ENCODE measurements at regions of chr5 and their contacts with region 1.

Region 1: GRCh38 chr5:148383564-148384379 is at the start of gene FBXO38:
- DNase-seq: peak; percentile 99
- H3K4me3 Mint-ChIP-seq: peak within 1 kb of the TSS; percentile 89
- H3K27ac Mint-ChIP-seq: peak within 1 kb of the TSS; percentile 94
- H3K4me1 Mint-ChIP-seq: peaks cover 63% of the 10 kb centered on the region
- H3K27me3 Mint-ChIP-seq: no peaks in the 10 kb centered on the region
- total RNA-seq, gene FBXO38: 31.7 to 34.2 TPM

Region 2: DNA sequence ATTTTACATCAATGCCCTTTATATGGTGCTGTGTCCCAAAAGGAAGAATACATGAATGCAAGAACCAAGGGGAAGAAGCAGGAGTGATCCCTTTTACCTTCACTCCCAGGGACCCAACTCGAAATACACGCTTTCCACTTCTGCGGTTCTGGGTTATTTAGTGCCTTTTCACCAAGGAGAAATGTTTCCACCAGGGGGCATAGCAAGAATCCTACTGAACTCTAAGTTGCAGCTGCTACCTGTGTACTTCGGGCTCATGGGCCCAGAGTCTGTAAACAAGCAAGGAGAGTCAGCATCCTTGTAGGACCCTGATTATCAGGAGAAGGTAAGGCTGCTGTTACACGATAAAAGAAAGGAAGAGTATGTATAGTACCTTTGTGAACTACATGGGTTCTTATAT is 919.6 kb before region 1 on chr5:
- CTCF ChIA-PET with region 1: no interaction called
- intact Hi-C with region 1: no loop called
- DNase-seq: no peak
- H3K4me3 Mint-ChIP-seq: no peak overlapping the region
- H3K27ac Mint-ChIP-seq: no peak overlapping the region
- H3K4me1 Mint-ChIP-seq: no peaks in the 10 kb centered on the region
- H3K27me3 Mint-ChIP-seq: peaks cover 8% of the 10 kb centered on the region

Region 3: DNA sequence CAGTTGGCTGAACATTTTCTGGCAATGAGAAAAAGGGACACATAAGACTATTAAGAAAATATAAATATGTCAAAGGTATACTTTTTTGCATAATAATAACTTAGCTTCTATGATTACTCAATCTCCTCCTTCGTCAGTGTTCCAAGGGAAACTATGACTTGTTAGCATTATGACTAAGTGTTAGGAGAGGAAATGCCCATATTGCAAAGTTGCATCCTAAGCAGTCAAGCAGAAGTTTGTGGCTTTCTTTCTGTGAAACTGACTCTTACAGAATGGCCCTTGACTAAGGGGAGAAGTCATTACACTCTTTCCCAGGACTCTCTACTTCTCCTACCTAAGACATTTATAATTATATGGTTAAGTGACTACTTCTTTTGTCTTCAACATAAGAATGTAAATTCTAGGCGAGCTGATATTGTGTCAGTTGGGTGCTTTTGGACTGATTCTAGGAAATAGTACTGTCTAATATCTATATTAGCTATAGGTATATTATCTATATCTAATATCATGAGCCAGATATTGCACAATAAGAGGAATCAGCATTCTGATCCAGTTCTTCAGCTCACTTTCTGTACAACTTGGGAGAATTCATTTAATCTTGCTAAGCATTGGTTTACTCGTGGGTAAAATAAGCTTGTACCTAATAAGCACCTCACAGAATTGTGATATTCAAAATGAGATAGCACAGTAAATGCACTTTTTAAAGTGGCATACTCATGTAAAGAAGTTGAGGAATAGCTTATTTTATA is 197.3 kb before region 1 on chr5:
- CTCF ChIA-PET with region 1: no interaction called
- intact Hi-C with region 1: loop called (anchors 1 kb)
- DNase-seq: peak; percentile 9
- H3K4me3 Mint-ChIP-seq: no peak overlapping the region
- H3K27ac Mint-ChIP-seq: no peak overlapping the region
- H3K4me1 Mint-ChIP-seq: peaks cover 2% of the 10 kb centered on the region
- H3K27me3 Mint-ChIP-seq: peaks cover 10% of the 10 kb centered on the region

Region 4: GRCh38 chr5:148482691-148483462 is 99.1 kb after region 1 on chr5:
- CTCF ChIA-PET with region 1: no interaction called
- intact Hi-C with region 1: loop called (anchors 1 kb)
- DNase-seq: peak; percentile 82
- H3K4me3 Mint-ChIP-seq: no peak overlapping the region
- H3K27ac Mint-ChIP-seq: no peak overlapping the region
- H3K4me1 Mint-ChIP-seq: peaks cover 3% of the 10 kb centered on the region
- H3K27me3 Mint-ChIP-seq: peaks cover 26% of the 10 kb centered on the region

Region 5: GRCh38 chr5:148606296-148606695 is 222.5 kb after region 1 on chr5:
- CTCF ChIA-PET with region 1: no interaction called
- intact Hi-C with region 1: no loop called
- DNase-seq: no peak
- H3K4me3 Mint-ChIP-seq: no peak overlapping the region
- H3K27ac Mint-ChIP-seq: no peak overlapping the region
- H3K4me1 Mint-ChIP-seq: no peaks in the 10 kb centered on the region
- H3K27me3 Mint-ChIP-seq: peaks cover 2% of the 10 kb centered on the region

Region 6: DNA sequence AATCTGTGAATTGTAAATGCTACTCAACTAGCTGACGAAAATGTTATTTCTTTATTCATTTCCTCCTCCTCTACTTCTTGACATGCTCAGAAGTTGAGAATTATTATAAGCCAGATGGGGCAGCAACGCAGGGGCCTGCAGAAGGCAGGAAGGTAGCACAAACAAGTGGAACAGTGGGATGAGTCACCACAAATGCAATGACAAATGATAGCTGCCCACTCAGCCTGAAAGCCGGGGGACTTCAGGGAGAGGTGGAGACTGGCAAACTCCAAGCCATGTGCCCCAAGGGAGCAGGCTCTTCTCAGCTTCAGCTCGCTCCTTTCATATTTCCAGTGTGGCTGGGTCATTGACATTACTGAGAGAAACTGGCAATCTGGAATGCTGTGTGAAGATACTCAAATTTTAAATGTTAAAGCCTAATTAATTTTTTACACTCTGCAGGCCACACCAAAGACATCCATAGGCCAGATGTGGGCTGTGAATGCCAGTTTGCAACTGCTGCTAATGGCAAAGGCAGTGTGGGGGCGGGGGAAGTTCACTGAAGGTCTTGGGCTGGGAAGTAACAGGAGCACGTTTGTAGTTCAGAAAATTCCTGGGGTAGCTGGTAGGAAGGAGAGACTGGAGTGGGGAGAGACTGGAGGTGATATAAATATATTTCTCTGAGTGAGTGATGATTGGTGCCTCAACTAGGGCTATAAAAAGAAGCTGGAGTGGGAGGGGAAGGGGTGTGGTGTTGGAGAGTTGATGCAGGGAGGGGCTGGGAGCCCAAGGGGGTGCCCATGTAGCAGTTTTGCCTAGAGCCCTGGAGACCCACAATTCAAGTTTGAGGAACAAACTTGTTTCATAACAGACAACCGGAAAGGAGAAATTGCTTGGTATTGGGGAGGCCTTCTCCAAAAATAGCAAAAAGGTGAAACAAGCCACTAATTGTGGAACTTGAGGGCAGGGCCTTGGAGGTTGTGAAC is 421.8 kb after region 1 on chr5:
- CTCF ChIA-PET with region 1: no interaction called
- intact Hi-C with region 1: loop called (anchors 5 kb)
- DNase-seq: peak; percentile 61
- H3K4me3 Mint-ChIP-seq: no peak overlapping the region
- H3K27ac Mint-ChIP-seq: no peak overlapping the region
- H3K4me1 Mint-ChIP-seq: peaks cover 58% of the 10 kb centered on the region
- H3K27me3 Mint-ChIP-seq: peaks cover 15% of the 10 kb centered on the region

Region 7: GRCh38 chr5:149357370-149358293 is 973.9 kb after region 1 on chr5 and contains the start of gene PCYOX1L:
- CTCF ChIA-PET with region 1: no interaction called
- intact Hi-C with region 1: loop called (anchors 1 kb)
- DNase-seq: peak; percentile 95
- H3K4me3 Mint-ChIP-seq: peak within 1 kb of the TSS; percentile 95
- H3K27ac Mint-ChIP-seq: peak within 1 kb of the TSS; percentile 90
- H3K4me1 Mint-ChIP-seq: peaks cover 61% of the 10 kb centered on the region
- H3K27me3 Mint-ChIP-seq: no peaks in the 10 kb centered on the region
- total RNA-seq, gene PCYOX1L: 19.9 to 21.0 TPM

Region 8: DNA sequence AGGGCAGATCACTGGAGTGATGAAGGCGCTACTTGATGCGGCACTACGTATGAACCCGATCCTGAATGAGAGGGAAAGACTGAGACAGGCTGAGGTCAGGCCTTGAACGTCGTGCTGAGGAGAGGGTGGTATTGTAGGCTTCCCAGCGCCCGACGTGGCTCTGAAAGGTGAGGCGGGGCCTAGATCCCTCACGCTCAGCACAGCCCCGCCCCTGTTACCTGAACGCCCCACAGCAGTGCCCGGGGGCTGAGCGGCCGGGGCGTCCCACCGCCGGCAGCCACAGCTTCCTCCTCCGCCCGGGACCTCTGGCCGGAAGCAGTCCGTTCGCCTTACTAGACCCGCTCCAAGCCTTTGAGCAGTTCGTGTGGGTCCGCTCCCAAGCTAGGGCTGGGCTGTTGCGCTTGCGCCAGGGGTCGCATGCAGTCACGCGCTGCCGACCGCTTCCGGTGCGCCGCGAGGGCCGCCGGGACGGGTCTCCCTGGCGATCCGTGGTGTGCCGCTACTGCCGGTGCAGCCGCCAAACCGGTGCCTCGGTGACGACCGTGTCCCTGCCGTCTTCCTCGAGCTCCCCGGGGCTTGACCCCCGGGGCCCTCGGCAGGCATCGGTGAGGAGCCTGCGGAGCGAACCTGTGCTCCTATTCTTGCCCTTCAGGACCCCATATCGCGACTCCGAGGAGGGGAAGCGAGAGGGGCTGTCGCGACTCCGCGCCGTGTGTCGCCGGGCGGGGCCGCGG is 1616.7 kb after region 1 on chr5 and contains the starts of genes HMGXB3 and TIGD6:
- CTCF ChIA-PET with region 1: no interaction called
- intact Hi-C with region 1: loop called (anchors 2 kb)
- DNase-seq: peak; percentile 91
- H3K4me3 Mint-ChIP-seq: peak within 1 kb of the TSS; percentile 86
- H3K27ac Mint-ChIP-seq: peak within 1 kb of the TSS; percentile 85
- H3K4me1 Mint-ChIP-seq: peaks cover 39% of the 10 kb centered on the region
- H3K27me3 Mint-ChIP-seq: no peaks in the 10 kb centered on the region
- total RNA-seq, gene HMGXB3: 24.3 to 26.8 TPM
- total RNA-seq, gene TIGD6: 2.6 to 2.7 TPM